GM12878 (cell line): ENCODE measurements at regions of chr9 and their contacts with region 1.

Region 1: DNA sequence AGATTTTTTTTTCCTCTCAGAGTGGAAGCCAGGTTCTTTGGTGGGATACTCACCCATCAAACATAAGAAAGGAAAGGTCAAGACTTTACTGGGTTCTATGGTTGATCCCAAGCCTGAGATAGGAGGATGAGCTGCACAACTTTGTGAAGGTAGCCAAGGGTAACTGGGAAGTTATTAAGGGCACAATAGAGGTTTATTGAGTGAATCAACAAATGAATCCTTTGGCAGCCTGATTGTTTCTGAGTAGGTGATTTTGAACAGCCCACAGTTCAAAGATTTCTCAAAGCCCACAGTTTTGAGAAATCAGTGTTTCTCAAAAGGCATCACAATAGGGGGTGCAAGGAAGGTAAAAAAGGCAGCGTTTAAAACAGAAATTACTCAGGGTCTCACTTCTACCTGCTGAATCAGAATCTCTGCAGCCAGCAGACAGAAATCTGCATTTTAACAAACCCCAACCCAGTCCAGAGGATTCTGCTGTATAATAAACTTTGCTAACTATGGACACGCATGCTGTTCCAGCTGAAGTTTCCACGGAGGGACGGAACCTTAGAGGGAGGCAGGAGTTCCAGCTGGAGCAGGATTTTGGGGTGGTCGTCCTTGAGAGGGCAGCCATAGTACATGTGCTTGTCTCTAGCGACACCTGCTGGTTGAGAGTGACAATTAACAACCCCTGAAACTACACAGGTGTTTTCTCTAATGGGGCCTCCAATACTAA is 32.7 kb upstream of the FSD1L start:
- DNase-seq: no peak
- ATAC-seq: peak; percentile 92
- H3K4me3 ChIP-seq: no peak overlapping the region
- H3K27ac ChIP-seq: no peak overlapping the region
- H3K4me1 ChIP-seq: peaks cover 9% of the 10 kb centered on the region
- H3K27me3 ChIP-seq: no peaks in the 10 kb centered on the region
- CTCF ChIP-seq: peak; percentile 79 to 91 (median 87)
- EP300 ChIP-seq: no peak
- POLR2A ChIP-seq: no peak
- RAD21 ChIP-seq: peak; percentile 98

Region 2: GRCh38 chr9:104774831-104775573 is 640.1 kb before region 1 on chr9:
- CTCF ChIA-PET with region 1: interaction called, 7 read pairs
- POLR2A ChIA-PET with region 1: interaction called, 12 read pairs
- RAD21 ChIA-PET with region 1: interaction called, 6 read pairs
- SMC1A ChIA-PET with region 1: interaction called, 10 read pairs
- in situ Hi-C with region 1: loop called (anchors 5 kb)
- intact Hi-C with region 1: loop called (anchors 2 kb)
- DNase-seq: peak; percentile 85
- ATAC-seq: peak; percentile 84
- H3K4me3 ChIP-seq: peak overlapping the region; percentile 63
- H3K27ac ChIP-seq: peak overlapping the region; percentile 98
- H3K4me1 ChIP-seq: peaks cover 17% of the 10 kb centered on the region
- H3K27me3 ChIP-seq: no peaks in the 10 kb centered on the region
- CTCF ChIP-seq: no peak
- EP300 ChIP-seq: peak; percentile 13 to 57; a peak in 2 of 4 replicates
- POLR2A ChIP-seq: peak; percentile 73
- RAD21 ChIP-seq: no peak

Region 3: GRCh38 chr9:104863180-104863883 is 551.8 kb before region 1 on chr9:
- CTCF ChIA-PET with region 1: interaction called, 66 read pairs
- POLR2A ChIA-PET with region 1: no interaction called
- RAD21 ChIA-PET with region 1: interaction called, 22 read pairs
- SMC1A ChIA-PET with region 1: interaction called, 7 read pairs
- in situ Hi-C with region 1: loop called (anchors 5 kb)
- intact Hi-C with region 1: loop called (anchors 1 kb)
- DNase-seq: peak; percentile 7
- ATAC-seq: peak; percentile 95
- H3K4me3 ChIP-seq: no peak overlapping the region
- H3K27ac ChIP-seq: no peak overlapping the region
- H3K4me1 ChIP-seq: peaks cover under 1% of the 10 kb centered on the region
- H3K27me3 ChIP-seq: no peaks in the 10 kb centered on the region
- CTCF ChIP-seq: peak; percentile 78 to 85 (median 82); a peak in 5 of 6 replicates
- EP300 ChIP-seq: no peak
- POLR2A ChIP-seq: no peak
- RAD21 ChIP-seq: peak; percentile 92

Region 4: DNA sequence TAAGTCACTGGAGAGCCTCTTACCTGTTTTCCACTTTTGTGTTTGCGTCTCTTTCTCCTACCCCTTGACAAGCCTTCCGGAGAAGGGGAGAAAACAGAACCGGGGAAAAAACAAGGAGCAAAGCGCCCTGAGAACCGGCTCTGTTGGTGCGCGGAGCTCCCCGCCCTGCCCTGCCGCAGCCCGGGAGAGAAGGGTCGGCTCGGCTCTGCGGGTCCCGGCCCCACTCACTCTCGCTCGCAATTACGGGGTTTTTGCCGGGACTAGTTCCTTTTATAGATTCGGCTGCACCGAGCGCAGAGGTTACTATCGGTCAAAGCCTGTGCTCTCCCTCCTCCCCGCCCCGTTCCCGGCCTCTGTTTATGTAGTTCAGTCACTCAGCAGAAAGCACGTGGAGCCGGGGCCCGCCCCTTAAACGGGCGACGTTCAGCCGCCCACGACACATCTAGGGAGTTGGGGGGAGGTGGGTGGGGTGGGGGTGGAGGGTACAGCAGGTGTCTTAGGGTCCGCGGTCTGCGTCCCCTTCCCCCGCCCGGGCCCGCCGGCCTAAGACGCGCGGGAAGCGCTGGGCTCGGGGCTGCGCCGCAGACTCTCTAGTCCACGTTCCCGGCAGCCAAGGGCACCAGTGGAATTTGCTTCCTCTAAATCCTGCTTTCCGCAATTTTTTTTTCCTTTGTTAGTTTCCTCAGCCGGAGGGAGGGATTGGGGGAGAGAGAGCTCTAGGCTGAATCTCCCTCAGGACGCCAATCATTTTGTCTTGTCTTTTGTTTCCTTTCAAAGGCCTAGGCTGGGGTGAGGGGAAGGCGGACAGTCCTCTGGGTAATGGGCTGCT is 487.0 kb before region 1 on chr9 and contains the start of gene ABCA1:
- CTCF ChIA-PET with region 1: no interaction called
- POLR2A ChIA-PET with region 1: no interaction called
- RAD21 ChIA-PET with region 1: no interaction called
- SMC1A ChIA-PET with region 1: no interaction called
- in situ Hi-C with region 1: no loop called
- intact Hi-C with region 1: loop called (anchors 5 kb)
- DNase-seq: no peak
- ATAC-seq: peak; percentile 60
- H3K4me3 ChIP-seq: peak within 1 kb of the TSS; percentile 71
- H3K27ac ChIP-seq: no peak within 1 kb of the TSS
- H3K4me1 ChIP-seq: peaks cover 7% of the 10 kb centered on the region
- H3K27me3 ChIP-seq: peaks cover 9% of the 10 kb centered on the region in 2 experiments
- CTCF ChIP-seq: no peak
- EP300 ChIP-seq: no peak
- POLR2A ChIP-seq: no peak
- RAD21 ChIP-seq: no peak
- polyA plus RNA-seq, gene ABCA1: 0.09 to 0.29 TPM

Region 5: DNA sequence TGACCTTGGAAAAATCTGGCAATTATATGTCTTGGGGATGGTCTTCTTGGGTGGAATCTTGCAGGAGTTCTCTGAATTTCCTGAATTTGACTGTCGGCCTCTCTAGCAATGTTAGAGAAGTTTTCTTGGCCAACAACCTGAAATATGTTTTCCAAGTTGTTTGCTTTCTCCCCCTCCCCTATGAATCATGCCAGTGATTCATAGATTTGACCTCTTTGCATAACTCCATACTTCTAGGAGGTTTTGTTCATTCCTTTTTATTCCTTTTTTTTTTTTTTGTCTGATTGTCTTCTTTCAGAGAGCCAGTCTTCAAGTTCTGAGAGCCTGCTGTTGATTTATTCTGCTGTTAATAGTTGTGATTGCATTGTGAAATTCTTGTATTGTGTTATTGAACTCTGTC is 227.3 kb before region 1 on chr9:
- CTCF ChIA-PET with region 1: interaction called, 6 read pairs
- POLR2A ChIA-PET with region 1: interaction called, 3 read pairs
- RAD21 ChIA-PET with region 1: interaction called, 6 read pairs
- SMC1A ChIA-PET with region 1: interaction called, 6 read pairs
- in situ Hi-C with region 1: no loop called
- intact Hi-C with region 1: loop called (anchors 1 kb)
- DNase-seq: no peak
- ATAC-seq: no peak
- H3K4me3 ChIP-seq: no peak overlapping the region
- H3K27ac ChIP-seq: no peak overlapping the region
- H3K4me1 ChIP-seq: peaks cover 8% of the 10 kb centered on the region
- H3K27me3 ChIP-seq: no peaks in the 10 kb centered on the region
- CTCF ChIP-seq: no peak
- EP300 ChIP-seq: no peak
- POLR2A ChIP-seq: no peak
- RAD21 ChIP-seq: no peak

Region 6: GRCh38 chr9:105251733-105252404 is 163.2 kb before region 1 on chr9:
- CTCF ChIA-PET with region 1: interaction called, 12 read pairs
- POLR2A ChIA-PET with region 1: no interaction called
- RAD21 ChIA-PET with region 1: interaction called, 6 read pairs
- SMC1A ChIA-PET with region 1: interaction called, 7 read pairs
- in situ Hi-C with region 1: no loop called
- intact Hi-C with region 1: no loop called
- DNase-seq: no peak
- ATAC-seq: no peak
- H3K4me3 ChIP-seq: no peak overlapping the region
- H3K27ac ChIP-seq: no peak overlapping the region
- H3K4me1 ChIP-seq: peaks cover under 1% of the 10 kb centered on the region
- H3K27me3 ChIP-seq: no peaks in the 10 kb centered on the region
- CTCF ChIP-seq: peak in 1 of 3 experiments; percentile 8; a peak in 1 of 6 replicates
- EP300 ChIP-seq: no peak
- POLR2A ChIP-seq: no peak
- RAD21 ChIP-seq: peak; percentile 41; the same call in 1 of the 2 replicates